CD8-positive, alpha-beta T cell (primary cell): ENCODE measurements at regions of chr7 and their contacts with region 1.

Region 1: DNA sequence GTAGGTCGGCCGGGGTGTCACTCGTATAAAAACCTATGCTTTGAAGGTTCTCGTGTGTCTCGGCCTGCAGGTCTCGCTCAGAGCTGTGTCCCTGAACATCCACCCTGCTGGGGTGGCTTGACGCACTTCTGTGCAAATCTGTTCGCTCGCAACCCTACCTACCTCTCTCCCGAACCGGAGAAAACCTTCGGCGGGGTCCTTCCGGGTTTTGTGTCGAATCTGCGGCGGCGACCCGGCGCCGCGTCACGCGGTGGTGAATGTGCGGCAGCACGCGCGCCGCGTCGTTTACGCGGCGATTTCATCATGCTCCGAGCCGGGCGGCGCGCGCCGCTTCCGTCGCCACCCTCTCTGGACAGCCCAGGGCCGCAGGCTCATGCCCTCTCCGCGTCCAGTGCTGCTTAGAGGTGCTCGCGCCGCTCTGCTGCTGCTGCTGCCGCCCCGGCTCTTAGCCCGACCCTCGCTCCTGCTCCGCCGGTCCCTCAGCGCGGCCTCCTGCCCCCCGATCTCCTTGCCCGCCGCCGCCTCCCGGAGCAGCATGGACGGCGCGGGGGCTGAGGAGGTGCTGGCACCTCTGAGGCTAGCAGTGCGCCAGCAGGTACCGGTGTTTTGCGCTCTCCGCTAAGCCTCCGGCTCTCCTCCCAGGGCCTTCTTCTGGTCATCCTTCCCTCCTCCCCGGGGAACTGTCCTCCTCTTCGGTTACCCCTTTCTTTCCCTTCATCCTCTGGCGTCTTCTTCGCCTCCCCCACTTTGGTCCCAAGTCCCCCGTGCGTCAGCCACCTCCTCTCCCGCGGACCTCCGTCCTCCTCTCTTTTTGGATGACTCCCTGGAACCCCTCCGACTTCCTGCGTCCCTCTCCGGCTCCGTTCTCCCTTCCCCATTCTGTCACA is at the start of gene GARS1:
- DNase-seq: peak; percentile 81 to 95 (median 89)
- ATAC-seq: peak; percentile 83
- H3K4me3 ChIP-seq: peak within 1 kb of the TSS; percentile 72 to 87
- H3K4me3 Mint-ChIP-seq: peak within 1 kb of the TSS; percentile 99
- H3K27ac ChIP-seq: peak within 1 kb of the TSS; percentile 90 to 93
- H3K27ac Mint-ChIP-seq: peak within 1 kb of the TSS; percentile 99
- H3K4me1 ChIP-seq: peaks cover 36% of the 10 kb centered on the region
- H3K4me1 Mint-ChIP-seq: peaks cover 73% of the 10 kb centered on the region
- H3K27me3 ChIP-seq: no peaks in the 10 kb centered on the region
- H3K27me3 Mint-ChIP-seq: no peaks in the 10 kb centered on the region
- CTCF ChIP-seq: no peak
- total RNA-seq, gene GARS1: 119 to 121 TPM

Region 2: GRCh38 chr7:30134611-30135545 is 459.9 kb before region 1 on chr7 and contains the start of gene MTURN:
- CTCF ChIA-PET with region 1: no interaction called
- POLR2A ChIA-PET with region 1: no interaction called
- intact Hi-C with region 1: loop called (anchors 1 to 5 kb)
- DNase-seq: peak; percentile 68 to 95 (median 86)
- ATAC-seq: peak; percentile 80
- H3K4me3 ChIP-seq: peak within 1 kb of the TSS; percentile 74 to 78
- H3K4me3 Mint-ChIP-seq: peak within 1 kb of the TSS; percentile 91
- H3K27ac ChIP-seq: peak within 1 kb of the TSS; percentile 4 to 49
- H3K27ac Mint-ChIP-seq: peak within 1 kb of the TSS; percentile 90
- H3K4me1 ChIP-seq: peaks cover 15% of the 10 kb centered on the region
- H3K4me1 Mint-ChIP-seq: peaks cover 11% of the 10 kb centered on the region
- H3K27me3 ChIP-seq: no peaks in the 10 kb centered on the region
- H3K27me3 Mint-ChIP-seq: no peaks in the 10 kb centered on the region
- CTCF ChIP-seq: no peak
- total RNA-seq, gene MTURN: 16.1 to 19.7 TPM

Region 3: DNA sequence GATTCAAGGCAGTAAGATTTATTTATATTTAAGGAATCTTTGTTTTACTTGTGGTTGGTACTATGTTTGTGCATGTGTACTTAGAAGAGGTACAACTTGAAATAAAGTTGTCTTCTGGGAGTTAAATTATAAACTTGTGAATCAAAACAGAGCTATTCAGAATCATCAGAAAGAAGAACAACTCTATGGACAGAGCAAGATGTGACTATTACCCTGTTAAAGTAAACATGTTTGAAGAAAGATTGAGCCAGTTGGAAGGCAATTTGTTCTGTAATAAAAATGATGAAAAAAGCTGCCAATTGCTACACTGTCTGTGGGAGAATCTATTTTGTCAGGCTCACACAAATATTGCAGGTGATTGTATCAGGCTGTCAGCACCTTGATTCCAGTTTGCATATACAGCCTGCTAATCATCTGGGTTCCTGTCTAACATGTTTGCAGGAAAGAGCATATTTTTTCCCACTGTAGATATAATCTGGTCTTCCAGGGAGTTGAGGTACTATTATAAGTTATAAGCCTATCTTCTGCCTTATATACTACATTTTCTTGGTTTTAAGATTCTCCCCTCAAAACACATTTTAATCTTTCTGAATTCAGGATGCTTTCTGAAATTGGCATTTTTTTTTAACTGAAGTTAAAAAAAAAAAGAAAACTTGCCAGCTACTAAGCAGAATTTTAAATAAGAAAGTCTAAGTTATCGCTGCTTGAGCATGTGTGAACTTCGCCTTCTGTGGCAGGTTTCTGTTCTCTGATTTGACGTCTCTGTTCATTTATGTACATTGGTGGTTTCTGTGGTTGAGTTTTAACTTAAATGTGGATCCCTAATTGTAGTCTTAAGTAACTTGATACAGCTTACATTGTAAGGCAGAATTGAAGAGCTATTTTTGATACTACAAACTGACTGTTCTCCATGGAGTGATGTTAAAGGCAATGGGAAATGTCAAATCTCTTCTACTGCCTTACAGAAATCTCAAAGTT is 264.4 kb before region 1 on chr7:
- CTCF ChIA-PET with region 1: no interaction called
- POLR2A ChIA-PET with region 1: no interaction called
- intact Hi-C with region 1: loop called in 1 of 2 experiments (anchors 10 kb)
- DNase-seq: peak in 3 of 9 experiments; percentile 38 to 84 (median 68)
- ATAC-seq: peak; percentile 84
- H3K4me3 ChIP-seq: peak overlapping the region in 1 of 2 experiments; percentile 12
- H3K4me3 Mint-ChIP-seq: peak overlapping the region; percentile 65
- H3K27ac ChIP-seq: peak overlapping the region in 1 of 2 experiments; percentile 66
- H3K27ac Mint-ChIP-seq: peak overlapping the region; percentile 81
- H3K4me1 ChIP-seq: peaks cover 26% of the 10 kb centered on the region
- H3K4me1 Mint-ChIP-seq: peaks cover 71% of the 10 kb centered on the region
- H3K27me3 ChIP-seq: no peaks in the 10 kb centered on the region
- H3K27me3 Mint-ChIP-seq: no peaks in the 10 kb centered on the region
- CTCF ChIP-seq: no peak

Region 4: DNA sequence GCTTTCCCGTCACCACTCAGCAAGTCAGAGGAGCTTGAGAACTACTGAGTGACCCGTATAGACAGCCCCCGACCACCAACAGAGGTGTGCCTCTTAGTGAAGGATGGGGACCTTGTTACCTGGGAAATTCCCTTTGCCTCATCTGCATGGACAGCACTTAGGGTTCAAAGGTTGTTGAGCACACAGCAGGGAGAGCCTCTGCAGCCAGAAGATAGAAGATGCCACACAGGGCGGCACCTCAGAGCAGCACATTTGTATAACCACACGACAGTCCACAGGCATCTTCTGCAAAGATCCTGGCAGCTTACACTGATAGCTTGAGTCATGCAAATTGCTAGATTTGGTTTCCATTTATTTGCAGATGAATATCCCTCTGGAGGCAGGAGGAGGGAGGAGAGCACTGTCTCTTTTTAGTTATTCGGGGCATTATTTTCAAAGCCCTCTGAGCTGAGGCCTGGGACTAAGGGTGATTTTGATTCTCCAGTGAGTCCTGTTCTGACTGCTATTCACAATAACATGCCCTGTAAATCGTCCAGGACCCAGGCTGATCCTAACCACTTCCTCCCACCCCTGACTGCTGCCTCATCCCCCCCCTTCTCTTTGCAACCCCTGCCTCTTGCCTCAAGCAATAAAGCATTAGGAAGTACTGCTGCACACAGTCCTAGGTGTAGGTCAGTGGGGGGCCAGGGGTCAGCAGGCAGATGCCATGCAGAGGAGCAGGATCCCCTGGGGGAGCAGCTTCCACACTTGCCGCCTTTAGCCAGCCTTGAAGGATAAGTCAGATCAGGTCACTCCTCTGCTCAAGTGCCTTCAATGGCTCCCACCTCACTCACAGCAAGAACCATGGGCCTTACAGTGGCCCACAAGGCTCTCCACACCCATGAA is 132.5 kb after region 1 on chr7:
- CTCF ChIA-PET with region 1: no interaction called
- POLR2A ChIA-PET with region 1: no interaction called
- intact Hi-C with region 1: loop called (anchors 2 to 5 kb)
- DNase-seq: peak; percentile 21 to 83 (median 64)
- ATAC-seq: peak; percentile 91
- H3K4me3 ChIP-seq: peak overlapping the region; percentile 49 to 53
- H3K4me3 Mint-ChIP-seq: peak overlapping the region; percentile 85
- H3K27ac ChIP-seq: peak overlapping the region; percentile 55 to 68
- H3K27ac Mint-ChIP-seq: peak overlapping the region; percentile 94
- H3K4me1 ChIP-seq: peaks cover 49% of the 10 kb centered on the region
- H3K4me1 Mint-ChIP-seq: peaks cover 75% of the 10 kb centered on the region
- H3K27me3 ChIP-seq: no peaks in the 10 kb centered on the region
- H3K27me3 Mint-ChIP-seq: no peaks in the 10 kb centered on the region
- CTCF ChIP-seq: no peak